Heart right ventricle (tissue), 16 donors: ENCODE measurements at regions of chrX and their contacts with region 1.

Region 1: GRCh38 chrX:54182864-54183608 is at the start of gene FAM120C:
- DNase-seq: peak; percentile 73
- ATAC-seq: peak; percentile 88 to 97 (median 94)
- H3K4me3 ChIP-seq: peak within 1 kb of the TSS; percentile 52 to 93 (median 78)
- H3K27ac ChIP-seq: peak within 1 kb of the TSS; percentile 77 to 92 (median 88)
- H3K4me1 ChIP-seq: peaks cover 0 to 37% (median 24%) of the 10 kb centered on the region in 9 donors
- H3K27me3 ChIP-seq: peaks cover 0 to 10% (median 0%) of the 10 kb centered on the region in 7 donors
- CTCF ChIP-seq: no peak
- total RNA-seq, gene FAM120C: 4.2 to 9.4 (median 6.7) TPM

Region 2: GRCh38 chrX:53683556-53684414 is 499.3 kb before region 1 on chrX:
- intact Hi-C with region 1: loop called in 1 of 10 experiments (anchors 10 kb)
- DNase-seq: peak; percentile 87 to 92
- ATAC-seq: peak; percentile 89 to 95 (median 92)
- H3K4me3 ChIP-seq: peak overlapping the region; percentile 53 to 90 (median 67)
- H3K27ac ChIP-seq: peak overlapping the region; percentile 68 to 93 (median 90)
- H3K4me1 ChIP-seq: peaks cover 0 to 36% (median 9%) of the 10 kb centered on the region in 9 donors
- H3K27me3 ChIP-seq: peaks cover 0 to 9% (median 0%) of the 10 kb centered on the region in 7 donors
- CTCF ChIP-seq: peak in 1 of 9 donors; percentile 20

Region 3: DNA sequence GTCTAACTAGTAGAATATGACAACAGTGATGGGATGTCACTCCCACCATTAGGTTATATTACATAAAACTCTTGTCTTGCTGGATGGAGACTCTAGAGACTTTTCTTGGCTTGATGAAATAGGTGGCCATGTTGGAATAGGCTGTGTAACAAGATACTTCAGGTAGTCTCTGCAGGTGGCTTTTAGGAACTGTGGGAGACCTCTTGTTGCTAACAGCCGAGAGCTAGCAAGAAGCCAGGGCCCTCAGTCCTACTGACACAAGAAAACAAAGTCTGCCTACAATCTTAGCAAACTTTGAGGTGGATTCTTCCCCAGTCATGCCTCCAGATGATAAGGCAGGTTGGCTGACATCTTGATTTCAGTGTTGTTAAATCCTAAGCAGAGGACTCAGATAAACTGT is 419.5 kb after region 1 on chrX:
- intact Hi-C with region 1: no loop called
- DNase-seq: no peak
- ATAC-seq: no peak
- H3K4me3 ChIP-seq: no peak overlapping the region
- H3K27ac ChIP-seq: no peak overlapping the region
- H3K4me1 ChIP-seq: no peaks in the 10 kb centered on the region
- H3K27me3 ChIP-seq: peaks cover 0 to 8% (median 0%) of the 10 kb centered on the region in 7 donors
- CTCF ChIP-seq: no peak

Region 4: GRCh38 chrX:55593756-55594257 is 1410.8 kb after region 1 on chrX:
- intact Hi-C with region 1: no loop called
- DNase-seq: no peak
- ATAC-seq: no peak
- H3K4me3 ChIP-seq: no peak overlapping the region
- H3K27ac ChIP-seq: no peak overlapping the region
- H3K4me1 ChIP-seq: no peaks in the 10 kb centered on the region
- H3K27me3 ChIP-seq: peaks cover 0 to 6% (median 0%) of the 10 kb centered on the region in 7 donors
- CTCF ChIP-seq: no peak